Gastrocnemius medialis (tissue), 4 donors: ENCODE measurements at regions of chr16 and their contacts with region 1.

Region 1: DNA sequence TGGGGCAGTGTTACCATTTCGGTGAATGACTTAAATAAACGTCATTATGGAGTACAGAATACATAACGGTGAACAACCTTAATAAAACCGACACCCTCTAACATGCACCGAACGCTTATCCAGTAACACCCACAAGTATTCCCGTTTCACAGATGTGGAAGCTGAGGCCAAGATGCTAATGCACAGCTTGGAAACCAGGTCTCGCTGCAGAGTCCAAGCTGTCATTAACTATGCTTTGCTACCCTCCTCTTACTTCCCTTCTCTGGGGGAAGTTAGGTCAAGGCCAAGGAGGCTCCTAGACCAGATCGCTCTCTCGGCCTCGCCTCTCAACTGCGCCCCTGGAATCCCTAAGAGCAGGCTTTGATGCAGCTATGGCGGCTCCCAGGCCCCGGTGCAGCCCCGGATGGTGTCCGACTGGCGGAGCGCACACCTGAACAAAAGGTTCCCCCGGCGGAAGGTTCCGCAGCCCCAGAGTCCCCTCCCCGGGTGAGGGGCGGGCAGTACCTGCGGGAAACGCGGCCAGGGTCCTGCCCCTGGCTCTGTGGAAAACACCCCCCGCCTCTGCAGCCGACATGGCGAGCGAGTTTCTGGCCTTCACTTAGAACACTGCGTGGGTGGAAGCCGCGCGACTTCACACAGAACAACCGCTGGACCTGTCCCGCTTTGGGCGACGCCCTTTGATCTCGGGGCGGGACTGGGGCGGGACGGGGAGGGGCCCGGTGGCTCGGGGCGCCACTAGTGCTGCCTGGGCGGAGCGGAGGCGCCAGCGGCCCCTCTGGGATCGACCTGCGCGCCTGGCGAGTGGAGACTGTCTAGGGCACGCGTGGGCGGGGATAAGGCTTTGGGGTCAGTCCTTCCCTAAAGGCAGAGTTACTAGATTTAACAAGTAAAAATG is at the start of gene CPPED1:
- DNase-seq: peak; percentile 70 to 82
- ATAC-seq: peak; percentile 95
- H3K4me3 ChIP-seq: peak within 1 kb of the TSS; percentile 64 to 74 (median 68)
- H3K27ac ChIP-seq: peak within 1 kb of the TSS; percentile 78 to 83 (median 83)
- H3K4me1 ChIP-seq: peaks cover 4 to 12% of the 10 kb centered on the region in 2 donors
- H3K27me3 ChIP-seq: no peaks in the 10 kb centered on the region
- CTCF ChIP-seq: no peak
- POLR2A ChIP-seq: no peak
- total RNA-seq, gene CPPED1: 2.8 to 8.7 (median 6.6) TPM

Region 2: DNA sequence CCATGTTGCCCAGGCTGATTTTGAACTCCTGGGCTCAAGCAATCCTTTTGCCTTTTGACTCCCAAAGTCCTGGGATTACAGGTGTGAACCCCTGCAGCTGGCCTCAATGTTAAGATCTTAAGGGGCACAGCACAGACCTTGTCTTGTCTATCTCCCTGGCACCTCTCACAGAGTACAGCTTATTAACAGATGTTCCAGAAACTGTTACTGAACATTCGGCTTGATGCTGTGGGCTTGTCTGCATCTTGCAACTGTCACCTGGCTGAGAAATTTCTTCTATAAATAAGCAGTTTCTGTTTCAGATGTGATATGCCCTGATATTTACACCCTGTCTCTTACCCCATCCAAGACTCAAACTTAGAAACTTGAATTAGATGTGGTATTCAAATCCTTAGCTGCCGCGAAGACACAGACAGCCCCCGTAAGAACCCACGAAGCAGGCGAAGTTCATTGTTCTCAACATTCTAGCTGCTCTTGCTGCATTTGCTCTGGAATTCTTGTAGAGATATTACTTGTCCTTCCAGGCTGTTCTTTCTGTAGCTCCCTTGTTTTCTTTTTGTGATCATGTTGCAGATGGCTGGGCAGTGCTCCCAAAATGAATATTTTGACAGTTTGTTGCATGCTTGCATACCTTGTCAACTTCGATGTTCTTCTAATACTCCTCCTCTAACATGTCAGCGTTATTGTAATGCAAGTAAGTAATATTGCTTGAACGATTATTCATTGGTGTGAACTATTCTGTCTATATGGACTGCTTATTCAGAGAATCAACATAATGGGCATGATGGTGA is 838.5 kb before region 1 on chr16 and contains the start of gene TNFRSF17:
- in situ Hi-C with region 1: loop called in 1 of 4 experiments (anchors 25 kb)
- intact Hi-C with region 1: no loop called
- DNase-seq: no peak
- ATAC-seq: no peak
- H3K4me3 ChIP-seq: no peak within 1 kb of the TSS
- H3K27ac ChIP-seq: no peak within 1 kb of the TSS
- H3K4me1 ChIP-seq: peaks cover 3 to 12% of the 10 kb centered on the region in 2 donors
- H3K27me3 ChIP-seq: no peaks in the 10 kb centered on the region
- CTCF ChIP-seq: no peak
- POLR2A ChIP-seq: no peak
- total RNA-seq, gene TNFRSF17: not detected

Region 3: DNA sequence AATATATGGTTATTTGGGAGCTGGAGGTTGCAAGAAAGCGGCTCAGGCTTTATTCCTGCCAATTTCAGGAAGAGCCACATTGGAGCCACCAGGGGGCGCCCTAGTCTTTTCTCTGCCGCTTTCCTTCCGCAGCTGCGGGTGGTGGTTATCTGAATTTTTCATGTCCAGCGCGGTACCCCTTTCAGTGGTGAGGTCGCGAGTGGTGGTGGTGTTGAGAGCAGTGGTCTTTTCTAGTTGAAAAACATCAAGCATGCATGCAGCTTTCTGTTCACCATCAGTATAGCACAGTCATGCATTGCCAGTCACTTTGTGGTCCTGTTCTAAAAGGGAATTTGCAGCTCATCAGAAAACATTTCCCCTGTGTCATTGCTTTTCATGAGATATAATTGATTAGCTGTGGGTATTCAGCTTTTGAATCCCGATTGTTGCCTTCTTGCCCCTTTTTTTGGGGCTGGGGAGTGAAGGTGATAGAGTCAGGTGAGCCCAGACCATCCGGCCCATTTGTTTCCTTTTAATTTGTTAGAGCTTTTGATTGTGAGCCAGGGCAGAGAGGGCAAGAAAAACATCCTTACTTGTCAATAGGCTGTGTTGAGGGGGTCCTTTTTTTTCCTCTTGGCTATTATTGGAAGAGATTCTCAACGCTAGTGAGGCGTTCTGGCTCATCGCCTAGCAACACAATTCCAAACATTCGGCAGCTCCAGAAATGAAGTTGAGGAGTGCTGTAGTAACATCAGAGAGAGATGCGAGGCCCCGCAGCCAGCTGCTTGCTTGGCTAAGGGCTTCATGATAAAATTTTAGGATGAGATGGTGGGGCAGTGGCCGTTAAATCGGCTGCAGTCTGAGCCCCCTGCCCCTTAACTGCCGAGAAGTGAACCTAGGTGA is 707.9 kb before region 1 on chr16:
- in situ Hi-C with region 1: loop called in 2 of 4 experiments (anchors 25 kb)
- intact Hi-C with region 1: no loop called
- DNase-seq: peak in 1 of 2 donors; percentile 33
- ATAC-seq: peak; percentile 39 to 45
- H3K4me3 ChIP-seq: peak overlapping the region; percentile 11 to 35 (median 24)
- H3K27ac ChIP-seq: no peak overlapping the region
- H3K4me1 ChIP-seq: peaks cover 21 to 22% of the 10 kb centered on the region in 2 donors
- H3K27me3 ChIP-seq: no peaks in the 10 kb centered on the region
- CTCF ChIP-seq: peak; percentile 78 to 92 (median 85)
- POLR2A ChIP-seq: no peak

Region 4: GRCh38 chr16:12455287-12455798 is 348.1 kb before region 1 on chr16:
- in situ Hi-C with region 1: loop called in 1 of 4 experiments (anchors 25 kb)
- intact Hi-C with region 1: no loop called
- DNase-seq: no peak
- ATAC-seq: peak in 1 of 2 donors; percentile 18
- H3K4me3 ChIP-seq: no peak overlapping the region
- H3K27ac ChIP-seq: no peak overlapping the region
- H3K4me1 ChIP-seq: no peaks in the 10 kb centered on the region
- H3K27me3 ChIP-seq: no peaks in the 10 kb centered on the region
- CTCF ChIP-seq: peak; percentile 45 to 81 (median 64)
- POLR2A ChIP-seq: no peak